Naive thymus-derived CD4-positive, alpha-beta T cell (primary cell): ENCODE measurements at regions of chr14 and their contacts with region 1.

Region 1: DNA sequence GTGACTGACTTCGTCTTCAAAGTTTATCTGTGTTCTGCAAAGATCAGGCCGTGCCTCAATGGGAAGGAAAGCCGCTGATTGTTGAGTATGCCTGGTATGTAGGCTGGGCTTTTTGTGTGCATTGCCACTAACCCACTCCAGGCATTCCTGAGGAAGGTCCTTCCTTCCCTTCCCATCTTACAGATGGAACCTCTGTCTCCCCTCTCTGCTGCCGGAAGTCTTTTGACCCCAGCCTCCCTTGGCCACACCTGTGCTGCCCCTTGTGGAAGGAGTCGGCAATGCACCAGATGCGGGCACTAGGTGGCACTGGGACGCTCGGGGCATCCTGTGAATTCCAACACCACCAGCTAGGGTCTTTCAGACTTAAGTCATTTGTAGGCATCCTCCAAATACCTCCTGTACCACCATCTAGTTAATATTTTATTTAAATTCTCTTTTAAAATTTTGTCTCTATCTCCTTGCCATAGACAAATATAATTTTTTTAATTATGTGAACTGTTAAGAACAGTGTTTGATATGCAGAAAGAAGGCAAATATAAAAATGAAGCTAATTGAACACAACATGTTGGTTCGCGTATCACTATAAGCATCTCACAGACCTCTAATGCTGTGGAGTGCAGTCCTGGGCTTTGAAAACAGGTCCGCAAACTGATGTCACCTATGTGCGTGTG is 99.5 kb downstream of the RIN3 start:
- DNase-seq: peak; percentile 50 to 82 (median 63)
- ATAC-seq: peak; percentile 53
- H3K4me3 ChIP-seq: no peak overlapping the region
- H3K4me3 Mint-ChIP-seq: peak overlapping the region in 5 of 10 donors; percentile 15 to 50 (median 41)
- H3K27ac ChIP-seq: no peak overlapping the region
- H3K27ac Mint-ChIP-seq: peak overlapping the region in 8 of 9 donors; percentile 10 to 89 (median 52)
- H3K4me1 ChIP-seq: peaks cover 46 to 57% of the 10 kb centered on the region in 2 donors
- H3K4me1 Mint-ChIP-seq: peaks cover 53 to 77% (median 70%) of the 10 kb centered on the region in 7 donors
- H3K27me3 ChIP-seq: no peaks in the 10 kb centered on the region
- H3K27me3 Mint-ChIP-seq: no peaks in the 10 kb centered on the region

Region 2: DNA sequence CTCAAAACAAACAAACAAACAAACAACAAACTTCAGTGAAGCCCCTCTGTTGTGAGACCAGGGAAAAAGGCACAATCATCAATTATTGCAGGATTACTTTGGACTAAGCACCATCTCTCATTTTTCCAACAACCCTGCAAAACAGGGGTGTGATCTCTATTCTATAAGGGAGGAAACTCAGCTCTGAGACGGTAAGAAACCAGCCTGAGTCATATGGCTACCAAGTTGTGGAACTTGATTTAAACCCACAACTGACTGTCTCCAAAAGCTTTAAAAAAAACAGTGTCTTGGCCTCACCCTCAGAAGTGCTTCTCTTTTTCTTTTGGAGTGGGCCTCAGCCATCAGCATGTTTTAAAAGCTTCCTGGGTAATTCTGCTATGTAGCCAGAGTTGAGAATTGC is 49.8 kb before region 1 on chr14:
- CTCF ChIA-PET with region 1: no interaction called
- POLR2A ChIA-PET with region 1: no interaction called
- intact Hi-C with region 1: no loop called
- DNase-seq: no peak
- ATAC-seq: peak; percentile 66
- H3K4me3 ChIP-seq: no peak overlapping the region
- H3K4me3 Mint-ChIP-seq: peak overlapping the region in 1 of 10 donors; percentile 10
- H3K27ac ChIP-seq: no peak overlapping the region
- H3K27ac Mint-ChIP-seq: peak overlapping the region in 2 of 9 donors; percentile 21 to 68
- H3K4me1 ChIP-seq: peaks cover 5 to 9% of the 10 kb centered on the region in 2 donors
- H3K4me1 Mint-ChIP-seq: peaks cover 15 to 64% (median 38%) of the 10 kb centered on the region in 7 donors
- H3K27me3 ChIP-seq: no peaks in the 10 kb centered on the region
- H3K27me3 Mint-ChIP-seq: no peaks in the 10 kb centered on the region

Region 3: GRCh38 chr14:92585981-92586937 is 26.9 kb before region 1 on chr14:
- CTCF ChIA-PET with region 1: interaction called, 5 read pairs
- POLR2A ChIA-PET with region 1: interaction called, 6 read pairs
- intact Hi-C with region 1: loop called in 1 of 2 experiments (anchors 1 kb)
- DNase-seq: peak in 8 of 9 donors; percentile 46 to 78 (median 66)
- ATAC-seq: peak; percentile 80
- H3K4me3 ChIP-seq: peak overlapping the region; percentile 33
- H3K4me3 Mint-ChIP-seq: peak overlapping the region; percentile 67 to 87 (median 76)
- H3K27ac ChIP-seq: peak overlapping the region; percentile 70
- H3K27ac Mint-ChIP-seq: peak overlapping the region; percentile 90 to 98 (median 95)
- H3K4me1 ChIP-seq: peaks cover 89 to 90% of the 10 kb centered on the region in 2 donors
- H3K4me1 Mint-ChIP-seq: peaks cover 63 to 100% (median 96%) of the 10 kb centered on the region in 7 donors
- H3K27me3 ChIP-seq: no peaks in the 10 kb centered on the region
- H3K27me3 Mint-ChIP-seq: peaks cover 0 to 18% (median 0%) of the 10 kb centered on the region in 5 donors

Region 4: DNA sequence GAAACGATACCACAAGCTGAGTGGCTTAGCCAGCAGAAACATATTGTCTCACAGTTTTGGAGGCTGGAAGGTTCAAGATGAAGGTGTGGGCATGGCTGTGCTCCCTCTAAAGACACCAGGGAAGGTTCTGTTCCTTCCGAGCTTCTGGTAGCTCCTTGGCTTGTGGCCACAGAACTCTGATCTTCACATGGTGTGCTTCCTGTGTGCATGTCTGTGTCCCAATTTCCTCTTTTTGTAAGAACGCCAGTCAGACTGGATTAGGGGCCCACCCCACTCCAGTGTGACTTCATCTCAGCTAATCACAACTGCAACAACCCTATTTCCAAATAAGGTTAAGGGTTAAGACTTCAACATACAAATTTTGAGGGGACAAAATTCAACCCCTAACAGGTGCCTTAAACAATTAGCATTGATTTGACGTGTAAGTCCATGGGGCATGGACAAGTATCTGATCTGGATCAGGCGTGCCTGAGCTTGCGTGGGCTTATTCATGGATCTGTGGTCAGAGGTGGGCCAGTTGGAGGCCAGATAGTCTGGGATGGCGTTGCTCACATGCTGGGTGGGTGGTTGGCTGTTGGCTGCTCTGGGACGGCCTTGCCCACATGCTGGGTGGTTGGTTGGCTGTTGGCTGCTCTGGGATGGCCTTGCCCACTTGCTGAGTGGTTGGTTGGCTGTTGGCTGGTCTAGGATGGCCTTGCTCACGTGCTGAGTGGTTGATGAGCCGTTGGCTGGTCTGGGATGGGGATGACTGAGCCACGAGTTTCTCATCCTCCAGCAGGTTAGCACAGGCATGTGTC is 46.8 kb after region 1 on chr14:
- CTCF ChIA-PET with region 1: interaction called, 24 read pairs
- POLR2A ChIA-PET with region 1: interaction called, 341 read pairs
- intact Hi-C with region 1: no loop called
- DNase-seq: no peak
- ATAC-seq: peak; percentile 69
- H3K4me3 ChIP-seq: no peak overlapping the region
- H3K4me3 Mint-ChIP-seq: peak overlapping the region in 9 of 10 donors; percentile 12 to 100 (median 60)
- H3K27ac ChIP-seq: peak overlapping the region; percentile 90
- H3K27ac Mint-ChIP-seq: peak overlapping the region in 8 of 9 donors; percentile 64 to 99 (median 93)
- H3K4me1 ChIP-seq: peaks cover 27 to 69% of the 10 kb centered on the region in 2 donors
- H3K4me1 Mint-ChIP-seq: peaks cover 67 to 100% (median 94%) of the 10 kb centered on the region in 7 donors
- H3K27me3 ChIP-seq: no peaks in the 10 kb centered on the region
- H3K27me3 Mint-ChIP-seq: no peaks in the 10 kb centered on the region

Region 5: DNA sequence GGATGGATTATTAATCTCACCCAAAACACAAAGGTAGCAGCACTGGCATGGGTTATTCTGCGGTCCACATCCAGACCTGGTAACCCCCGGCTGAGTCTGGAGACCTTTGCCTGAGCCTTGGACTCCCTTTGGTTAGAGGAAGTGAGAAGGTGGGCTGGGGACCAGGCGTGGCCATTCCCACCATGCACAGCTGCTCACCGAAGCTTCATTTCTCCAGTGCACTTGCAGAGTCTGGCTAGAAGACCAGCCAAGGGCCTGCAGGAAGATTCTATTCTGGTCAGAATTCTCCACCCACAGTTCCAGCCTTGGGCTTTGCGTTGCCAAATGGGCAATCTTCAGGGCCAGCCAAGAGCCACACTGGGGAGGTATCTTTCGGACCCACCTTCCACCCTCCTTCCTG is 62.3 kb after region 1 on chr14:
- CTCF ChIA-PET with region 1: interaction called, 37 read pairs
- POLR2A ChIA-PET with region 1: interaction called, 15 read pairs
- intact Hi-C with region 1: no loop called
- DNase-seq: no peak
- ATAC-seq: no peak
- H3K4me3 ChIP-seq: no peak overlapping the region
- H3K4me3 Mint-ChIP-seq: peak overlapping the region in 5 of 10 donors; percentile 9 to 53 (median 26)
- H3K27ac ChIP-seq: peak overlapping the region; percentile 52
- H3K27ac Mint-ChIP-seq: peak overlapping the region in 7 of 9 donors; percentile 44 to 96 (median 84)
- H3K4me1 ChIP-seq: peaks cover 13 to 26% of the 10 kb centered on the region in 2 donors
- H3K4me1 Mint-ChIP-seq: peaks cover 36 to 71% (median 56%) of the 10 kb centered on the region in 7 donors
- H3K27me3 ChIP-seq: no peaks in the 10 kb centered on the region
- H3K27me3 Mint-ChIP-seq: no peaks in the 10 kb centered on the region

Region 6: GRCh38 chr14:92686900-92687444 is 73.8 kb after region 1 on chr14:
- CTCF ChIA-PET with region 1: interaction called, 37 read pairs
- POLR2A ChIA-PET with region 1: interaction called, 9 read pairs
- intact Hi-C with region 1: no loop called
- DNase-seq: peak; percentile 20 to 84 (median 52)
- ATAC-seq: peak; percentile 89
- H3K4me3 ChIP-seq: no peak overlapping the region
- H3K4me3 Mint-ChIP-seq: no peak overlapping the region
- H3K27ac ChIP-seq: no peak overlapping the region
- H3K27ac Mint-ChIP-seq: peak overlapping the region in 2 of 9 donors; percentile 43
- H3K4me1 ChIP-seq: no peaks in the 10 kb centered on the region
- H3K4me1 Mint-ChIP-seq: peaks cover 0 to 5% (median 0%) of the 10 kb centered on the region in 7 donors
- H3K27me3 ChIP-seq: no peaks in the 10 kb centered on the region
- H3K27me3 Mint-ChIP-seq: no peaks in the 10 kb centered on the region

Region 7: DNA sequence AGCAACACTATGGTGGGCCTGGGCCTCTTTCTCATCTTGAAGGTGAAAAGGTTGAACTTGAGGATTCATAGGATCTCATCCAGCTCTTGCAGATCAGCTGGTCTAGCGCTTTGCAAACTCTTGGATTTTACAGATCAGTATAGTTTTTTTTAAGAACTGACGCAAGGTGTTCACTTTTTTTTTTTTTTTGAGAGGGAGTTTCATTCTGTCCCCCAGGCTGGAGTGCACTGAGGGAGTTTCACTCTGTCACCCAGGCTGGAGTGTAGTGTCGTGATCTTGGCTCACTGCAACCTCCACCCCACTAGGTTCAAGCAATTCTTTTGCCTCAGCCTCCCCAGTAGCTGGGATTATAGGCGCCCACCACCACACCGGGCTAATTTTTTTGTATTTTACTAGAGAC is 155.7 kb after region 1 on chr14:
- CTCF ChIA-PET with region 1: no interaction called
- POLR2A ChIA-PET with region 1: no interaction called
- intact Hi-C with region 1: no loop called
- DNase-seq: no peak
- ATAC-seq: no peak
- H3K4me3 ChIP-seq: no peak overlapping the region
- H3K4me3 Mint-ChIP-seq: peak overlapping the region in 1 of 10 donors; percentile 32
- H3K27ac ChIP-seq: no peak overlapping the region
- H3K27ac Mint-ChIP-seq: peak overlapping the region in 1 of 9 donors; percentile 69
- H3K4me1 ChIP-seq: no peaks in the 10 kb centered on the region
- H3K4me1 Mint-ChIP-seq: peaks cover 0 to 25% (median 0%) of the 10 kb centered on the region in 7 donors
- H3K27me3 ChIP-seq: no peaks in the 10 kb centered on the region
- H3K27me3 Mint-ChIP-seq: peaks cover 0 to 44% (median 0%) of the 10 kb centered on the region in 5 donors